Dorsolateral prefrontal cortex (tissue), 120 donors: ENCODE measurements at regions of chr11 and their contacts with region 1.

Region 1: DNA sequence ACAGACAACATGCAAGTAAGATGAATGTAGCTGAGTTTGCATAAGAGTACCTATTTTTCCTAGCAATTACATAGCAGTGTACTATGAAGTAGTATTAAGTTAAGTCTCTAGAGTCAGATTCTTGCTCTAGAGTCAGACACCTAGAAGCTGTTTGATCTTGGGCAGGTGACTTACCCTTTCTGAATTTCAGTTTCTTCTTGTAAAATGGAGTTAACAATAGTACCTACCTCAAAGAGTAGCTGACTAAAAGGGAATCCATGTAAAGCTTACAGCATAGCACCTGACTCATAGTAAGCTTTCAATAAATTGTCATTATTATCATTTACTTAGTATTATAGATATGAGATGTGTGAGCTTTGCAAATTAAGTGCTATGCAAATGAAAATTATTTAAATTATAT is 47.8 kb upstream of the PTPRJ start:
- DNase-seq: no peak
- H3K4me3 ChIP-seq: no peak overlapping the region
- H3K27ac ChIP-seq: no peak overlapping the region
- H3K27me3 ChIP-seq: no peaks in the 10 kb centered on the region
- CTCF ChIP-seq: no peak

Region 2: DNA sequence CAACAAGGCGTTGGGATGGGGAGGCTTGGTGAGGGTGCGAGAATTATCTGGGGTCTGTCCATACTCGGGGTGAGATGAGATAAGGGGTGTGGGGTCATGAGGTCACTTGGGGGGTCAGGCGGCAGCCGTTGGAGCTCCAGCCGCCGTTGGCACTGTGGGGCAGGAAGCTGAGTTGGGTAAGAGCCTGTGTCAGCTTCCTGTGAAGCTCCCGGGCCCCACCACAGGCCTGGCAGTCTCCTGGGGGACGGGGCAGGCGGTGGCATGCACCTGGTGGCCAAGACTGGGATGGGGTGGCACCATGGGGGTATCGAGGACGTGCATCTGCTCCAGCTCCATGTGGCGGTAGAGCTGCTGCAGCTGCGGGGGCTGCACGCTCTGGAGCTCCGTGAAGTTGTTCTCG is 573.0 kb before region 1 on chr11:
- intact Hi-C with region 1: no loop called
- DNase-seq: no peak
- H3K4me3 ChIP-seq: no peak overlapping the region
- H3K27ac ChIP-seq: no peak overlapping the region
- H3K27me3 ChIP-seq: no peaks in the 10 kb centered on the region
- CTCF ChIP-seq: no peak

Region 3: GRCh38 chr11:47847892-47848635 is 84.5 kb before region 1 on chr11 and contains the start of gene NUP160:
- intact Hi-C with region 1: no loop called
- DNase-seq: peak; percentile 77 to 93 (median 88)
- H3K4me3 ChIP-seq: peak within 1 kb of the TSS; percentile 59 to 100 (median 93)
- H3K27ac ChIP-seq: peak within 1 kb of the TSS; percentile 76 to 99 (median 94)
- H3K27me3 ChIP-seq: no peaks in the 10 kb centered on the region
- CTCF ChIP-seq: peak in 38 of 56 donors; percentile 9 to 57 (median 30)
- total RNA-seq, gene NUP160: 15.7 to 43.6 (median 27.8) TPM

Region 4: DNA sequence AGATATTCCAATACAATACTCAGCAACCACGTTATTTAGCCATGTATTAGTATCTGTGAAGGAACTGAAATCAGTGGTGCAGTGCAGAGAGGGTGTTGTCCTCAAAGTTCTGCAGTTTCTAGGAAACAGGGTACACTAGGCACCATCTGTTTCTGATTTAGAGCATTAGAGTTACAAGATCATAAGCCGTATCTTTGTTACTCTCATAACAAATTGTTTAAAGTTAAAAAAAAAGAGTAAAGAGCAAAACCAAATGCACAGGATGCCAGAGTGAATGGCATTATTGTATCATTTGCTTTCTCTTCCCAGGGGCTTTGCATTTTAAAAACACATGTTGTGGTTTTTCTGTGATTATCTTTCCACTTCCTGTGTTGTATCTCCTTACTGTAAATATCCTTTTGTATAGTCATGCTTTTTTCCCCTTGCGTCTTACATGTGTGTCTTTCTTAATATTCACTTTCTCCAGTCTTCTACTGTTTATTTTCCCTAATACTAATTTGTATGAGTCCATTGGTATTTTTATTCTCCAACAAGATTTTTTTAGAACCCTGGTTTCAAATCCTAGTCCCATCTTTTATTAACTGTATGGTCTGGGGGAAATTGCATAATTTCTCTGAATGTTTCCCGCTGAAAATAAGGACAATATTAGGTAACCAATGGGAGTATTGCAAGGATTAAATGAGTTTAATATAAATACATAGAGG is 69.2 kb before region 1 on chr11:
- intact Hi-C with region 1: loop called in 1 of 2 experiments (anchors 10 kb)
- DNase-seq: no peak
- H3K4me3 ChIP-seq: no peak overlapping the region
- H3K27ac ChIP-seq: no peak overlapping the region
- H3K27me3 ChIP-seq: no peaks in the 10 kb centered on the region
- CTCF ChIP-seq: no peak

Region 5: DNA sequence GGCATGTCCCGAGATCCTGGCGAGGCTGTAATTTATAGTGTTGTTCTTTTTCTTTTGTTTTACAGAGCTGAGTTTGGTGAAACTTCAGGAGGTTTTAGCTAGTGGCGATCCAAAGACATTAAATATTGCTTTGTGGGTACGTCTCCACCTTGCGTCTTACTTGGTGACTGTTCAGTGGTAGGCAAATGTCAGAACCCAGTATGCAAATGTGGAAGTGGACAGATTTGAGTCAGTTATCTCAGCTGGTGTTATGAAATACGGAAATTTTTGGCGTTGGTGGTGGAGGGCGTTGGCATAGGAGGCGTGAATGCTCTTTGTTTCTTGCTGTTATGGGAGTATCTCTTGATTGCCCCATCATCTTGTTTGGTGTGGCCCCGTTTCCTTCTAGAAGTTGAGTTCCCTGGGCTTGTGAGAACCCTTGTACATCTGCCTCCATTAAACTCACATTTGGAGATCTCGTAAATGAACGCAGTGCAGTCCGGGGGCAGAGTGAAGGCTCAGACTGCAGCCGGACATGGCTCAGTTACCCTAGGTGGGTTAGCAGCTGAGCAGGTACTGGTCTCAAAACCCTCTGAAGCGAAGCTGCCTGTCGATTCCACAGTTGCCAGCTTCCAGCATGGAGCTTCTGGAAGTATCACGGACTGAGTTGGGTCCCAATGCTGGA is 87.7 kb after region 1 on chr11:
- intact Hi-C with region 1: loop called in 1 of 2 experiments (anchors 10 kb)
- DNase-seq: no peak
- H3K4me3 ChIP-seq: no peak overlapping the region
- H3K27ac ChIP-seq: peak overlapping the region in 15 of 59 donors; percentile 7 to 82 (median 27)
- H3K27me3 ChIP-seq: no peaks in the 10 kb centered on the region
- CTCF ChIP-seq: no peak

Region 6: GRCh38 chr11:48109046-48109666 is 176.6 kb after region 1 on chr11:
- intact Hi-C with region 1: loop called (anchors 1 to 5 kb)
- DNase-seq: no peak
- H3K4me3 ChIP-seq: peak overlapping the region in 56 of 59 donors; percentile 13 to 69 (median 48)
- H3K27ac ChIP-seq: peak overlapping the region in 58 of 59 donors; percentile 11 to 99 (median 80)
- H3K27me3 ChIP-seq: no peaks in the 10 kb centered on the region
- CTCF ChIP-seq: peak in 53 of 56 donors; percentile 29 to 69 (median 57)